Activated CD4-positive, alpha-beta T cell treated with anti-CD3 and anti-CD28 coated beads, Interleukin-2, amount 10 ng/mL, durations not matched to agents 7 days and 5 days (primary cell): ENCODE measurements at regions of chr6 and their contacts with region 1.

Region 1: DNA sequence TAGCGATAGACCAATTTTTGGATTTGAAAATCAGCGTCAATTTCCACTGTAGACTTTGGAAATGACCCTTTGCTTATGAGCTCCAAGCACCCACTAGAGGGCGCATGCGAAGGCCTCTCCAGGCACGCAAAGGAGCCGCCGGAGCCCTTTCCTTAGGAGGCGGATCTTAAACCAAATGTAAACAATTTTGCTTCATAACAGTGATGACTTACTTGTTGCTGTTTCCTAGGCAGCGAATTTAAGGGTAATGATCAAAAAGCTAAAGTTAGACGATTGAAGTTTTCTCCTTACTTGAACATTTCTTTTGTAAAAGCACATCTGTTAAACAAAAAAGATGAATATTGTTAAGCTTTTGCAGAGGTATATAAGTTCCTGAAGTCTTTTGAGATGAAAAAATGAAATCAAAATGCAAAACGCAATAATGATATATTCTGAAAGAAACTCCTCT is 29.2 kb upstream of the EXOC2 start:
- DNase-seq: peak; percentile 83
- H3K4me3 Mint-ChIP-seq: no peak overlapping the region
- H3K27ac Mint-ChIP-seq: no peak overlapping the region
- H3K4me1 Mint-ChIP-seq: peaks cover 6% of the 10 kb centered on the region
- H3K27me3 Mint-ChIP-seq: peaks cover 12% of the 10 kb centered on the region

Region 2: GRCh38 chr6:610882-611281 is 111.2 kb before region 1 on chr6:
- CTCF ChIA-PET with region 1: no interaction called
- POLR2A ChIA-PET with region 1: no interaction called
- DNase-seq: no peak
- H3K4me3 Mint-ChIP-seq: no peak overlapping the region
- H3K27ac Mint-ChIP-seq: no peak overlapping the region
- H3K4me1 Mint-ChIP-seq: peaks cover 10% of the 10 kb centered on the region
- H3K27me3 Mint-ChIP-seq: no peaks in the 10 kb centered on the region

Region 3: GRCh38 chr6:710601-711571 is 11.2 kb before region 1 on chr6:
- CTCF ChIA-PET with region 1: interaction called, 12 read pairs
- POLR2A ChIA-PET with region 1: no interaction called
- DNase-seq: peak; percentile 68
- H3K4me3 Mint-ChIP-seq: peak overlapping the region; percentile 98
- H3K27ac Mint-ChIP-seq: peak overlapping the region; percentile 100
- H3K4me1 Mint-ChIP-seq: peaks cover 39% of the 10 kb centered on the region
- H3K27me3 Mint-ChIP-seq: peaks cover 3% of the 10 kb centered on the region

Region 4: GRCh38 chr6:753486-753885 is 31.4 kb after region 1 on chr6:
- CTCF ChIA-PET with region 1: no interaction called
- POLR2A ChIA-PET with region 1: no interaction called
- DNase-seq: no peak
- H3K4me3 Mint-ChIP-seq: no peak overlapping the region
- H3K27ac Mint-ChIP-seq: no peak overlapping the region
- H3K4me1 Mint-ChIP-seq: no peaks in the 10 kb centered on the region
- H3K27me3 Mint-ChIP-seq: peaks cover 5% of the 10 kb centered on the region

Region 5: DNA sequence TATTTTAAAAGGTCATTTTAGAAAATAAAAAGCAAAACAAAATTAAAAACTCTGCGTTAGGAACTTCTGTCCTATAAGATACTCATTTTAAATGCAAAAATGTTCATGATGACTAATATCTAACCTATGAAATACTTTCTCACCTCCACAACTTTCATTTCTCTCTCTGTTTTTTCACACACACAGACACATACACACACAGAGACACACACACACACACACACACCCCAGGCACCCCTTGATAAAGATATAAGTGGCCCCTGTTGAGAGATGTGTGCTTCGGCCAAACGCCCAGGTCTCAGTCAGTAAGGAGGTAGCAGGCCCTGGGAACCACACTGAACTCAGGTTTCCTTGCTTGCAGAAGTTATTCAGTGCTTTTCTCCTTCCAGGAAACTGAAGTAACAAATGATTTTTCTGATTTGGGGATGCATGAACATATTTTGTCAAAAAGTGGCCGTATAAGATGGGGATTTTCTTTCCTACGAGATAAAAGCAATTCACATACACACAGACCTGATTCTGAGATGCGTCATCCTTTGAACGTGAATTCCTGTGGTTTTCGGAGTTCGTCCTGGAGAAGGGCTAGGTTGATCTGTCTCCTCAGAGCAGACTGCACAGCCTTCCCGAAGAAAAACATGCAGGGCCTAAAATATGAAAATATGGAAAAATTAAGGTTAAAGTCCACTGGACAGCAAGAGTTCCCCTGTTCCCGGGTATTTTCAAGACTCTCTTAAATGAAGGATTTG is 283.0 kb after region 1 on chr6:
- CTCF ChIA-PET with region 1: no interaction called
- POLR2A ChIA-PET with region 1: no interaction called
- DNase-seq: no peak
- H3K4me3 Mint-ChIP-seq: no peak overlapping the region
- H3K27ac Mint-ChIP-seq: no peak overlapping the region
- H3K4me1 Mint-ChIP-seq: no peaks in the 10 kb centered on the region
- H3K27me3 Mint-ChIP-seq: peaks cover 7% of the 10 kb centered on the region